ENCODE measurements at regions of chr17 and their contacts with region 1.

Region 1: GRCh38 chr17:20121359-20122253 is 112.4 kb downstream of the SPECC1 start:
- DNase-seq: peak; percentile 36 to 81 (median 71)
- ATAC-seq: peak; percentile 68
- H3K4me3 ChIP-seq: no peak overlapping the region
- H3K4me3 Mint-ChIP-seq: no peak overlapping the region
- H3K27ac ChIP-seq: no peak overlapping the region
- H3K27ac Mint-ChIP-seq: no peak overlapping the region
- H3K4me1 ChIP-seq: no peaks in the 10 kb centered on the region
- H3K4me1 Mint-ChIP-seq: peaks cover 2% of the 10 kb centered on the region
- H3K27me3 ChIP-seq: no peaks in the 10 kb centered on the region
- H3K27me3 Mint-ChIP-seq: peaks cover 2% of the 10 kb centered on the region
- CTCF ChIP-seq: peak; percentile 82

Region 2: DNA sequence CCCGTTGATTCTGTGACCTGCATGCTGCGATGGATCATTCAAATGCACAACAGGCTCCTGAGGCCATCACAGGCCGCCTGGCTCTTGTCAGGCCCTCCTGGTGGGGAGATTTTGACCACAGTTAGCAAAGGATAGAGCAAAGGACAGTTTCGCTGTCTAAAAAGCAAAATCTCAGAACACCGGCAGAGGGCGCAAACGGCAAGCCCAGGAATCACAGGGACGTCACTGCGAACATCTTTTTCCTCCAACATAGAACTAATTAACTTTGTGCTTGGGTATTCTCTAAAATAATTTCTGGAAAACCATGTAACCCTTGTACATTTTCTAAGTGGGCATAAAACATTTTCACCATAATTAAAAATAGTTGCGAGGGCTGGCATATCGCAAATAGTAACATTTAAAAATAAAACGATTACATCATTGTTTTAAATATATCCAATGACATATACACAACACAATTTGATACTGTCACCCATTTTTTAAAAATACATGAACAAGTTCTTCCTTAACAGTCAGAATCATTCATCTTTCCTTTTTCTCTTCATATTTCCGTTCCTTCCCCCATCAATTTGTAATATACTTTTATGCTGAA is 607.6 kb before region 1 on chr17:
- CTCF ChIA-PET with region 1: no interaction called
- POLR2A ChIA-PET with region 1: no interaction called
- intact Hi-C with region 1: loop called in 1 of 2 experiments (anchors 10 kb)
- DNase-seq: peak; percentile 30 to 81 (median 69)
- ATAC-seq: peak; percentile 70
- H3K4me3 ChIP-seq: no peak overlapping the region
- H3K4me3 Mint-ChIP-seq: no peak overlapping the region
- H3K27ac ChIP-seq: no peak overlapping the region
- H3K27ac Mint-ChIP-seq: no peak overlapping the region
- H3K4me1 ChIP-seq: no peaks in the 10 kb centered on the region
- H3K4me1 Mint-ChIP-seq: no peaks in the 10 kb centered on the region
- H3K27me3 ChIP-seq: no peaks in the 10 kb centered on the region
- H3K27me3 Mint-ChIP-seq: no peaks in the 10 kb centered on the region
- CTCF ChIP-seq: peak; percentile 89

Region 3: GRCh38 chr17:19992803-19993713 is 128.5 kb before region 1 on chr17:
- CTCF ChIA-PET with region 1: interaction called, 59 read pairs
- POLR2A ChIA-PET with region 1: no interaction called
- intact Hi-C with region 1: loop called (anchors 1 kb)
- DNase-seq: peak; percentile 39 to 87 (median 76)
- ATAC-seq: peak; percentile 99
- H3K4me3 ChIP-seq: no peak overlapping the region
- H3K4me3 Mint-ChIP-seq: no peak overlapping the region
- H3K27ac ChIP-seq: no peak overlapping the region
- H3K27ac Mint-ChIP-seq: no peak overlapping the region
- H3K4me1 ChIP-seq: peaks cover 3% of the 10 kb centered on the region
- H3K4me1 Mint-ChIP-seq: peaks cover 4% of the 10 kb centered on the region
- H3K27me3 ChIP-seq: no peaks in the 10 kb centered on the region
- H3K27me3 Mint-ChIP-seq: peaks cover 5% of the 10 kb centered on the region
- CTCF ChIP-seq: peak; percentile 59

Region 4: DNA sequence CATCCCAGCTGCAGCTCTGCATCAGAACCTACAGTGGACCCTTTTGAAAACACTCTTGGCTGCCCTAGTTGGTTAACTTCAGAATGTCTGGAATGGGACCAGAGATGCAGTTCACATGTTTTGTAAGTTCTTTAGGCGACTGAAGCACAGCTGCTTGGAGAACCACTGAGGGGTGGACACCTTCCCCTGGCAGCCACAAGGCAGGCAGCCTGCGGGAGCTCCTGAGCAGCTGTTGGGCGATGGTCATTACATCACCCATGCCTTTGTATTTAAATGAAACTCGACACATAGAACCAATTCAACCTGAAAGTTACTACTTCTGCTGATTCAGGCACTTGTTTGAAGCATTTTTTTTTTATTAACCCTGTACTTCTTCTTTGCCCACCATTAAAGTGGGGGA is 194.2 kb after region 1 on chr17:
- CTCF ChIA-PET with region 1: interaction called, 20 read pairs
- POLR2A ChIA-PET with region 1: no interaction called
- intact Hi-C with region 1: loop called in 1 of 2 experiments (anchors 1 kb)
- DNase-seq: no peak
- ATAC-seq: no peak
- H3K4me3 ChIP-seq: no peak overlapping the region
- H3K4me3 Mint-ChIP-seq: no peak overlapping the region
- H3K27ac ChIP-seq: no peak overlapping the region
- H3K27ac Mint-ChIP-seq: no peak overlapping the region
- H3K4me1 ChIP-seq: no peaks in the 10 kb centered on the region
- H3K4me1 Mint-ChIP-seq: no peaks in the 10 kb centered on the region
- H3K27me3 ChIP-seq: no peaks in the 10 kb centered on the region
- H3K27me3 Mint-ChIP-seq: no peaks in the 10 kb centered on the region
- CTCF ChIP-seq: no peak

Measured in CD8-positive, alpha-beta T cell (primary cell).